Activated CD8-positive, alpha-beta T cell treated with anti-CD3 and anti-CD28 coated beads for 36 hours (primary cell): ENCODE measurements at regions of chr2 and their contacts with region 1.

Region 1: DNA sequence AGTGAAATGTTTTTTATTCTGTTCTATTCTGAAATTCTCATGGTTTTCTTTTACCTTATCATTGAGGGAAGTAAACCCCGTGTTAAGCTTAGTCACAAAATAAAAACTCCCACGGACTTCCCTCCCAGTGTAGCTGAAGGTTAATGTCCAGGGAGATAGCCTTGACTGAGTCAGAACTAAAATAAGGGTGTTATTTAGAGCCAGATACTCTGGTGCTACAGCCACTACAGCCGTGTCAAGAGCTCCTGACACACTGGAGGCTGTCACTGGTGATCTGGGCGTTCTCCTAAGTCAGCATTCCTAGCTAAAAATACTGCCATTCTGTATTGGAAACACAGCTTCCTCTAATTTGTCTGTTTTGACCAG is 82.0 kb upstream of the RANBP2 start:
- DNase-seq: no peak
- ATAC-seq: no peak
- H3K4me3 Mint-ChIP-seq: no peak overlapping the region
- H3K27ac Mint-ChIP-seq: peak overlapping the region; percentile 34
- H3K4me1 Mint-ChIP-seq: peaks cover 53% of the 10 kb centered on the region
- H3K27me3 Mint-ChIP-seq: no peaks in the 10 kb centered on the region
- CTCF ChIP-seq: no peak

Region 2: GRCh38 chr2:108594132-108594981 is 42.9 kb before region 1 on chr2:
- CTCF ChIA-PET with region 1: interaction called, 49 read pairs
- POLR2A ChIA-PET with region 1: no interaction called
- intact Hi-C with region 1: loop called (anchors 5 kb)
- DNase-seq: peak; percentile 43
- ATAC-seq: peak; percentile 67
- H3K4me3 Mint-ChIP-seq: peak overlapping the region; percentile 57
- H3K27ac Mint-ChIP-seq: peak overlapping the region; percentile 84
- H3K4me1 Mint-ChIP-seq: peaks cover 57% of the 10 kb centered on the region
- H3K27me3 Mint-ChIP-seq: no peaks in the 10 kb centered on the region
- CTCF ChIP-seq: peak; percentile 20

Region 3: DNA sequence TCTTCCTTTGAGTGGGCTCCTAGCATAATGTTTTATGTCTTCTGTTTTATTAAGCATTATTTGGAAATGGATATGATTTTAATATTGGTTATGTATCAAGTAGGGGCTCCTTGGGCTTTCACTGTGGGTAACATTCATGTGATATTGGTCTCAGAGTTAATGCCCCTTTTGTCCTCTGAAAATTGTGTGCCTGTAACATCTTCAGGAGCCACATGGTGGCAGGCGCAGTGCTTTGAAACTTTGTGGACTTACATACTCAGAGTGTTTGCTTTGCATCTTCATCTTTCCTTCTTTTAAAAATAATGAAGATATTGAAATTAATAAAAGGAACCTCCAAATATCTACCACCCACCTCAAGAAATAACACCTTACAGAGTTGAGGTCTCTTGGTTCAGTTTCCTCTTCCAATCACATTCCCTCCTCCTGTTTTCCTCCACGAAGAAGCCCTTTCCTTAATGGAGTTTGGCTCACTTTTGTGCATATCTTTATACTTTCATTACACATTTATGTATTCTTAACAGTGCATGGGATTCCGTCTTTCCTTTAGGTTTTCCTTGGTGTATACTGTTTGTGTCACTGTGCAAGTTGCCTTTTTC is 29.5 kb before region 1 on chr2:
- CTCF ChIA-PET with region 1: interaction called, 120 read pairs
- POLR2A ChIA-PET with region 1: interaction called, 5 read pairs
- intact Hi-C with region 1: no loop called
- DNase-seq: peak; percentile 68
- ATAC-seq: no peak
- H3K4me3 Mint-ChIP-seq: no peak overlapping the region
- H3K27ac Mint-ChIP-seq: no peak overlapping the region
- H3K4me1 Mint-ChIP-seq: peaks cover 34% of the 10 kb centered on the region
- H3K27me3 Mint-ChIP-seq: no peaks in the 10 kb centered on the region
- CTCF ChIP-seq: peak; percentile 68

Region 4: DNA sequence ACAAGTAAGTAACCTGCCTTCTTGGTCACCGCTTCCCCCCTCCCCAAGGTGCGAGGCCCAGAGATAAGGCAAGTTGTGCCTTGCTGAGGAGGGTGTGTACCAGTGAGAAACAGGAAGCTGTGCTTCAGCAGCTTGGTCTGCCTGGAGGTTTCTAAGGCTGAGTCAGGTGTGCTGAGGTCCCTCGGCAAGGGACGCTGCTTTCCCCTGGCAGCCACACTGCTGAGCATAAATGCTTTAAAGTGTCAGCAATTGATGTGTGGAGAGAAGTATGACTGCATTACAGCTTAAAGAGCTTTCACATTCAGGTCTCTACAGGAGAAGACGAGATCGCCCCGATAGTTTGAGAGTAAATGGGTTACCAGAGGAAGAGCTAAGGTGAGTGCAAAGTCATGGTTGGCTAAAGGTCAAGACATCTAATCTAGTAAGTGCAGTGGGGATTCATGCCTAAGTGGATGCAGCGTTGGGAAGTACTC is 16.2 kb before region 1 on chr2:
- CTCF ChIA-PET with region 1: interaction called, 129 read pairs
- POLR2A ChIA-PET with region 1: interaction called, 6 read pairs
- intact Hi-C with region 1: no loop called
- DNase-seq: peak; percentile 87
- ATAC-seq: peak; percentile 96
- H3K4me3 Mint-ChIP-seq: peak overlapping the region; percentile 82
- H3K27ac Mint-ChIP-seq: peak overlapping the region; percentile 95
- H3K4me1 Mint-ChIP-seq: peaks cover 79% of the 10 kb centered on the region
- H3K27me3 Mint-ChIP-seq: no peaks in the 10 kb centered on the region
- CTCF ChIP-seq: no peak

Region 5: GRCh38 chr2:108825254-108825653 is 188.0 kb after region 1 on chr2:
- CTCF ChIA-PET with region 1: no interaction called
- POLR2A ChIA-PET with region 1: no interaction called
- intact Hi-C with region 1: no loop called
- DNase-seq: no peak
- ATAC-seq: no peak
- H3K4me3 Mint-ChIP-seq: no peak overlapping the region
- H3K27ac Mint-ChIP-seq: no peak overlapping the region
- H3K4me1 Mint-ChIP-seq: no peaks in the 10 kb centered on the region
- H3K27me3 Mint-ChIP-seq: no peaks in the 10 kb centered on the region
- CTCF ChIP-seq: no peak